HepG2 (cell line): ENCODE measurements at regions of chr13 and their contacts with region 1.

Region 1: DNA sequence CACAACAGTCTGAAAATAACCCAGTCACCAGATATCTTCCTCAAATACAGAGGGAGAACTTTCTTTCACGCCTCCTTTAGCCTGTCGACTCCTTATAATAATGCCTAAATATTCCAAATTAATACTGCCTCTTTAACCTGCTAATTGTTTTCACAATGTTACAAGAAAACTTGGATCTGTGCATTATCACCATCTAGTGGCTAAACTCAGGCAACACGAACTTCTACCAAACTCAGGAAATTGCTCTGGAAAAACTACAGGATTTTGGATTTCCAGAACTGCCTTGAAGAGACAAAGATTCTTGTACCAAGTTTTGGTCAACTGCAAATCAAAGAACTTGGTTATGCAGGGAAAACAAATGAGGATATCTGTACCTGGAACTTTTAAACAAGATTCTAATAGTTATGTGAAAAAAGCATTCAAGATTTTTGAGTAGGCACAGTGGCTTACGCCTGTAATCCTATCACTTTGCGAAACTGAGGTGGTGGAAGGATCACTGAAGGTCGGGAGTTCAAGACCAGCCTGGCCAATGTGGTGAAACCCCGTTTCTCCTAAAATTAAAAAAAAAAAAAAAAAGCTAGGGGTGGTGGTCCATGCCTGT is 10.8 kb downstream of the CLN5 start:
- DNase-seq: peak; percentile 23
- ATAC-seq: peak; percentile 76
- H3K4me3 ChIP-seq: no peak overlapping the region
- H3K27ac ChIP-seq: no peak overlapping the region
- H3K4me1 ChIP-seq: no peaks in the 10 kb centered on the region
- H3K27me3 ChIP-seq: no peaks in the 10 kb centered on the region
- CTCF ChIP-seq: peak; percentile 62
- EP300 ChIP-seq: no peak
- POLR2A ChIP-seq: no peak
- RAD21 ChIP-seq: no peak

Region 2: DNA sequence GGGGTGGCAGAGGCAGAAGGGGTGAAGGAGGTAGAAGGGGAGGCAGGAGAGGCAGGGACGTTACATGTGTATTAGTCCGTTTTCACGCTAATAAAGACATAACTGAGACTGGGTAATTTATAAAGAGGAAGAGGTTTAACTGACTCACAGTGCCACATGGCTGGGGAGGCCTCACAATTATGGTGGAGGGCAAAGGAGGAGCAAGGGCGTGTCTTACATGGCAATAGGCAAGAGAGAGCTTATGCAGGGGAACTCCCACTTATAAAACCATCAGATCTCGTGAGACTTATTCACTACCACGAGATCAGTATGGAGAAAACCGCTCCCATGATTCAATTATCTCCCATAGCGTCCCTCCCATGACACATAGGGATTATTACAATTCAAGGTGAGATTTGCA is 73.4 kb before region 1 on chr13:
- CTCF ChIA-PET with region 1: no interaction called
- POLR2A ChIA-PET with region 1: no interaction called
- in situ Hi-C with region 1: no loop called
- intact Hi-C with region 1: no loop called
- DNase-seq: no peak
- ATAC-seq: no peak
- H3K4me3 ChIP-seq: no peak overlapping the region
- H3K27ac ChIP-seq: no peak overlapping the region
- H3K4me1 ChIP-seq: no peaks in the 10 kb centered on the region
- H3K27me3 ChIP-seq: no peaks in the 10 kb centered on the region; a peak in 1 of 5 replicates
- CTCF ChIP-seq: no peak
- EP300 ChIP-seq: no peak
- POLR2A ChIP-seq: no peak
- RAD21 ChIP-seq: no peak

Region 3: DNA sequence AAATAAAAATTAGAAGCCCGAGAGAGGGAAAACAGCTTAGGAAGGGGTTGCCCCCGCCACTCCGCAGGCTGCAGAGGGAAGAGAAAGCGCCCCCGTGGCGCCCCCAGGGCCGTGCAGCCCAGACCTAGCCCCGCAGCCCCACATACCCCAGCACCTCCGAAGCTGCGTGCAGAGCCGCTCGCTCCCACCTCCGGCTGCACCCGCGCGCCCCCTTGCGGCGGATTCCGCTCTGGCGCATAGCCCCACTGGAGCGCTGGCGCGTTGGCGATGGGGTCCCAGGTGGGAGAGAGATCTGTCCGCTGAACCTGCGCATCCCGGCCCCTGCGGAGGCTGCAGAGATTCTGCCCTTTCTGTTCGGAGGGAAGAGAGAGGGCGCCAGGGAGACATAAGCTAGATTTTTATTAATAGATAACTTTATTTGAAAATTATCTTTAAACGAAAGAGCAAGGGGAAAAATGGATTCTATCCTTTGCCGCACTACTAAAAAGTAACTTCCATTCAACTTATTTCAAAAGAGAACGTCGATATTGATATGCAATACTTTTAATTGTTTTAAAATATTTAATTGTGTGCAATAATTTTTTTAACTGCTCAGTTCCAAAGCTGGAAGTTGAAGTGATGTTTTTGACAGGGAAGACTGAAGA is 22.5 kb before region 1 on chr13:
- CTCF ChIA-PET with region 1: interaction called, 10 read pairs
- POLR2A ChIA-PET with region 1: no interaction called
- in situ Hi-C with region 1: no loop called
- intact Hi-C with region 1: loop called (anchors 1 kb)
- DNase-seq: peak; percentile 43
- ATAC-seq: peak; percentile 99
- H3K4me3 ChIP-seq: peak overlapping the region; percentile 26 to 66 (median 36); a peak in 2 of 6 replicates
- H3K27ac ChIP-seq: no peak overlapping the region
- H3K4me1 ChIP-seq: peaks cover 30% of the 10 kb centered on the region
- H3K27me3 ChIP-seq: peaks cover 0 to 23% of the 10 kb centered on the region in 2 experiments; a peak in 2 of 5 replicates
- CTCF ChIP-seq: peak; percentile 94
- EP300 ChIP-seq: no peak
- POLR2A ChIP-seq: no peak
- RAD21 ChIP-seq: peak; percentile 70